ENCODE measurements at regions of chr19 and their contacts with region 1.

Region 1: DNA sequence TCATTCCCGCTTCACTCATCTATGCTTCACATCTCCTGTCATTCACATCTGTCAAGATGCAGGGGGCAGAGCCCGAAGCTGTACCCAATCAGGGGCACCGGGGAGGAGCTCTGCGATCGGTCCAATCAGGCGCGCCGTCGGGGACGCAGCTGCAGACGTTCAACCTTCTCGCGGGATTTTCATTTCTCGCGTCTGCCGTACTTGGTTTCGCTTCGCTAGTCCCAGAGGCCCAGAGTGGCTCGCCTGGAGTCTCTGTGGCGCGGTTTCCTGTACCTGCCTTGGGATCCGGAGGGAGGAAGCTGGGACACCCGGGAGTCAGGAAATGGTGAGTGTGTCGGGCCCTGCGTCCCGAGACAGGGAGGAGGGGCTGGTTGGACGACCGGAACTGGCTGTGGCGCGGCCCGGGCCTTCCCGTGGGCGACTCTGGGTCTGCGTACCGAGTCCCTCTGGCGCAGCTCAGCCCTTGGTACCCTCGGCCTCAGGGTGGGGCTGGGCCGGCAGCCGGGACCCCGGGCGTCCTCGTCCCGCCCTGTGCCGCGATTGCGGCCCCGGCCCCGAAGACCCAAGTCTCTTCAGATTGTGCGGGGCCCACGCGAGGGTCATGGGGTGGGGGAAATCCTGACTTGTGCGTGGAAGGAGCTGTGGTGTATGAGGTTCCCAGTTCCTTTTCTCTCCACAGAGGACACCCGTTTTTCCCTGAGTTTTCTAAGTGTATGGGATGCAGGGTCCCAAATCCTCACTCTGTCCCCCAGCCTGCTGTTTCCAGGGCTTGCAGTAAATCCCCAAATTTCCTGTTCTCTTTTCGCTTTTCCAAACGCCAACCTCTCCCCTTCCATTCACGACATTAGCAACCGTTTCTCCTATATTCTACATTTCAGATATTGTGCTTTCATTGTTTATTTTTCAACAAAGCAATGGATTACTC is at the start of gene ZNF136:
- DNase-seq: peak; percentile 97
- H3K4me3 ChIP-seq: peak within 1 kb of the TSS; percentile 79
- H3K27ac ChIP-seq: peak within 1 kb of the TSS; percentile 90
- H3K4me1 ChIP-seq: no peaks in the 10 kb centered on the region
- H3K27me3 ChIP-seq: no peaks in the 10 kb centered on the region
- CTCF ChIP-seq: no peak
- total RNA-seq, gene ZNF136: 9.6 and 12.2 TPM in 2 replicates

Region 2: GRCh38 chr19:11806354-11807098 is 356.6 kb before region 1 on chr19:
- CTCF ChIA-PET with region 1: interaction called, 22 read pairs
- POLR2A ChIA-PET with region 1: no interaction called
- intact Hi-C with region 1: no loop called
- DNase-seq: no peak
- H3K4me3 ChIP-seq: no peak overlapping the region
- H3K27ac ChIP-seq: no peak overlapping the region
- H3K4me1 ChIP-seq: no peaks in the 10 kb centered on the region
- H3K27me3 ChIP-seq: no peaks in the 10 kb centered on the region
- CTCF ChIP-seq: no peak

Region 3: DNA sequence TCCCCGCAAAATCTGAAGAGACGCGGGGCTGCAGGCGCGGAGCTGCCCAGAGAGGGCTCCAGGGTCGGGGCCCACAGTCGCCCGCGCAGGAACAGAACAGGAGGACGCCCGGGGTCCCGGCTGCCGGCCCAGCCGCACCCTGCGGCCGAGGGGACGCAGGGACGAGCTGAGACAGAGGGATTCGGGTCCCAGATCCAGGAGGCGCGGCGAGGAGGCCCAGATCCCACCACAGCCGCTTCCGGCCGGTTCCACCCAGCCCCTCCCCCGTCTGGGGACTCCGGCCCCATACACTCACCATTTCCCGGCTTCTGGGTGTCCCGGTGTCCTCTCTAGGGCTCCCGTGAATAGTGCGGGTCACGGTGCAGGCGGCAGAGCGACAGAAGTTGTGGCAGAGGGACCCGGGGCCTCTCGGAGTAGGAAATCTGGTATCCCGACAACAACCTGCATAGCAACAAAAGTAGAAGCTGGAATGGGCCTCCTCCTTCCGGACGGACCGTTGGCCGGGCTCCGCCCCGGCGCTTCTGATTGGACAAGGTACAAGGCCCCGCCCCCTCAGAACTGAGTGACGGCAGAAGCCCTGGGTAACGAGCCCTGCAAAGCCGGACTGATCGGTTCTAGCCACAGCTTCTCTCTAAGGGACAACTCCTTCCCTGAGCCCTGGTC is 23.1 kb before region 1 on chr19 and contains the start of gene ZNF20:
- CTCF ChIA-PET with region 1: no interaction called
- POLR2A ChIA-PET with region 1: no interaction called
- intact Hi-C with region 1: no loop called
- DNase-seq: peak; percentile 96
- H3K4me3 ChIP-seq: peak within 1 kb of the TSS; percentile 80
- H3K27ac ChIP-seq: peak within 1 kb of the TSS; percentile 79
- H3K4me1 ChIP-seq: peaks cover 8% of the 10 kb centered on the region
- H3K27me3 ChIP-seq: no peaks in the 10 kb centered on the region
- CTCF ChIP-seq: no peak
- total RNA-seq, gene ZNF20: 4.9 and 5.4 TPM in 2 replicates

Region 4: DNA sequence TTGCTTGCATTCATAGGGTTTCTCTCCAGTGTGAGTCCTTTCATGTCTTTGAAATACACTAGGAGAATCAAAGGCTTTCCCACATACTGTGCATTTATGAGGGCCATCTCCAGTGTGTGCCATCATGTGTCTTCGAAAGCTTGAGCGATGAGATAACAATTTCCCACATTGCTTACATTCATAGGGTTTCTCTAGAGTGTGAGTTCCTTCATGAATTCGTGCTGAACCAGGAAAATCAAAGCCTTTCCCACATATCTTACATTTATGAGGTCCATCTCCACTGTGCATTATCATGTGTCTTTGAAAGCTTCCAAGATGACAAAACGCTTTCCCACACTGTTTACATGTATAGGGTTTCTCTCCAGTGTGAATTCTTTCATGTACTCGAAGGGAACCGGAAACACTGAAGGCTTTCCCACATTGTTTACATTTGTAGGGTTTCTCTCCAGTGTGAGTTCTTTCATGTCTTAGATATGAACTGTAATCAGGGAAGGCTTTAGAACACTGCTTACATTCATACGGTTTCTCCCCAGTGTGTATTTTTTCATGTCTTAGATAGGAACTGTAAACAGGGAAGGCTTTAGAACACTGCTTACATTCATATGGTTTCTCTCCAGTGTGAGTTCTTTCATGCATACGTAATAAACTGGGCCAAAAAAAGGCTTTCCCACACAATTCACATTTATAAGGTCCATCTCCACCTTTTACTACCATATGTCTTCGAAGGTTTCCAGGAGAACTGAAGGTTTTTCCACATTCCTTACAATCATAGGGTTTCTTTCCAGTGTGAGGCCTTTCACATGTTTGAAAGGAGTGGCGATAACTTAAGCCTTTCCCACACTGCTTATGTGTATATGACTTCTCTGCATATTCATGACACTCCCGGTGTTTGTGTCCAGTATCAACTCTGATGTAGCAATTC is 110.1 kb after region 1 on chr19:
- CTCF ChIA-PET with region 1: no interaction called
- POLR2A ChIA-PET with region 1: interaction called, 14 read pairs
- intact Hi-C with region 1: no loop called
- DNase-seq: no peak
- H3K4me3 ChIP-seq: no peak overlapping the region
- H3K27ac ChIP-seq: no peak overlapping the region
- H3K4me1 ChIP-seq: no peaks in the 10 kb centered on the region
- H3K27me3 ChIP-seq: no peaks in the 10 kb centered on the region
- CTCF ChIP-seq: no peak

Measured in A673 (cell line).